ENCODE measurements at regions of chr6 and their contacts with region 1.

Region 1: DNA sequence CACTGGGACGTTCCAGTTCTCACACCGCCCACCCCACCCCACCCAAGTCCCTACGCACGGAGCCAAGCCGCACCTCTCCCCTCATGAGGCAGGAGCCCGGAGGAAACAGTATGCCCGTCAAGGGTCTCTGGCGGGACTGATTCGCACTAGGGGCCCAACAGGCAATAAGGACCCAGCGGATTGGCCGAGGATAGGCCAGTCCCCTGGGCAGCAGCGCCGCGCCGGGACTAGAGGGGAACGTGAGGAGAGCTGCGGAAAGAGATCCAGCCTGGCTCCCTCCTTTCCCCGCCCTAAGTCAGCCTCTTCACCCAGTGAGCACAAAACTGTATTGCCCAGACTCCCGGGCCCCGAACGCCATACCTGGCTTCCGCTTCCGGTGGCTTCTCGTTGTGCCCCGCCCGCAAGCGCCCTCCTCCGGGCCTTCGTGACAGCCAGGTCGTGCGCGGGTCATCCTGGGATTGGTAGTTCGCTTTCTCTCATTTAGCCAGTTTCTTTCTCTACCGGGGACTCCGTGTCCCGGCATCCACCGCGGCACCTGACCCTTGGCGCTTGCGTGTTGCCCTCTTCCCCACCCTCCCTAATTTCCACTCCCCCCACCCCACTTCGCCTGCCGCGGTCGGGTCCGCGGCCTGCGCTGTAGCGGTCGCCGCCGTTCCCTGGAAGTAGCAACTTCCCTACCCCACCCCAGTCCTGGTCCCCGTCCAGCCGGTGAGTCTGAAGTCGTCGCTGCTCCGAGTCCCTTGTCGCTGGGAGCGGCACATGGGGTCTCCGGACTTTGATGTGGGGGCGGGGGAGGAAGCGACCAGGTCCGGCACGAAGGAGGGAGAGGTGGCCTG is at the start of gene CSNK2B:
- DNase-seq: peak; percentile 99
- H3K4me3 ChIP-seq: peak within 1 kb of the TSS; percentile 81 to 96 (median 88)
- H3K27ac ChIP-seq: peak within 1 kb of the TSS; percentile 95 to 98 (median 98)
- H3K4me1 ChIP-seq: peaks cover 0 to 60% (median 47%) of the 10 kb centered on the region in 4 donors
- H3K27me3 ChIP-seq: no peaks in the 10 kb centered on the region
- CTCF ChIP-seq: no peak
- EP300 ChIP-seq: no peak
- POLR2A ChIP-seq: peak; percentile 54 to 84
- total RNA-seq, gene CSNK2B: 188 to 227 (median 209) TPM

Region 2: DNA sequence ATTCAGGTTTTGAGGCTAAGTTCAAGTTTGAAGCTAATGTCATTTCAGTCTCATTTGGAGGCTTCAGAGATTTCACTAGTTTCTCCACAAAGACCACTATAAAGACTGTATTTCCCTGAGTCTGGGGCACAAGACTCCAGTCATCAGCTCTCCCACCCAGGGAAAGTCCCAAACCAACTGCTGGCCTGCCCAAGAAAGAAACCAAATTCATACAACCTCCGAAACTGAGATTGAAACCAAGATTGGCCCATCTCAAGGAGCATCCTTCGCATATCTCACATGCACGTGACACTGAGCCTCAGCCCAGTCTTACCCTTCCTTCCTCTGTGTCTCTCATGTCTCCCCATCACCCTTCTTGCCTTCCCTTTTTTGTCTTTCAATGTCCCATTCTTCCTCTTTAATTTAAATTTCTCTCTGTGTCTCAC is 97.2 kb before region 1 on chr6:
- intact Hi-C with region 1: no loop called
- DNase-seq: no peak
- H3K4me3 ChIP-seq: no peak overlapping the region
- H3K27ac ChIP-seq: no peak overlapping the region
- H3K4me1 ChIP-seq: no peaks in the 10 kb centered on the region
- H3K27me3 ChIP-seq: peaks cover 0 to 28% (median 0%) of the 10 kb centered on the region in 3 donors
- CTCF ChIP-seq: no peak
- EP300 ChIP-seq: no peak
- POLR2A ChIP-seq: no peak

Region 3: DNA sequence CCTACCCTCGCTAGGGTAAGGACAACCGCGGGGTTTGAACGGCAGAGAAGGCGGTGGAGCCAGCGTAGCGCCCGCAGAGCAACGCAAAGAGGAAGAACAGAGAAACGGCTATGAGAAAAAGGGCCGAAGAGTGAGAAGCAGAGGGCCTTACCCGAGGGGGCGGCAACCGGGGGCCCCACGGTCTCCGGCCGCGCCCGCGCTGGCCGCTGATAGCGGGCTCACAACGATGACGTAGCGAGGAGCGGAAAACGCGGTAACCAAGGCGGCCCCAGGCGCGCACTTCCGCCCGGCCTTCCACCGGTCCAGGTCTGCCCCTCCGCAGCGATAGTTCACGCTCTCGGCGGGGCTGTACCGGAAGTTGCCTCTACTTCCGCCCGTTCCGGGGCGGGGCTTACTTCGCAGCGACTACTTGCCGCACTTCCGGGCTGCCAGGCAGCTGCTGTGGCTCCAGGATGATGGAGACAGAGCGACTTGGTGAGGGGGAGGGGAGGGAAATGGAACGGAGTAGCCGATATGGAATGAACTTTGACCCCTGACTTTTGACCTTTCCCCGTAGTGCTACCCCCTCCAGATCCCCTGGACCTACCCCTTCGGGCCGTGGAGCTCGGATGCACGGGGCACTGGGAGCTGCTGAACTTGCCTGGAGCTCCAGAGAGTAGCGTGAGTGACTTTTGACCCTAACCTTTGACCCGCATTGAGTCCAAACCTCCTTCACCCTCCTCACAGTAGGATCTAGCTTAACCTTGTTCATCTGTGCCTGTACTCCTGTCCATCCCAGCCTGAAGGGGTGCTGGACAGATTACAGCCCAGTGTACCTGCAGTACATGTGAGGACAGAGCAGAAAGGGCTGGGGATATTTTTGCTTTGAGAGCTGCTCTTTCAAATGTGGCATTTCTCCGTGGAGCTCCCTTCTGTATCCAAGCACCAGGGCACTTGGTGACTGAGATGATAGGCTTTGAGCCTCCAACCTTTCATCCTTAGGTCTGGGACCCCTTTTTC is 293.3 kb after region 1 on chr6 and contains the starts of genes NELFE and SKIC2:
- intact Hi-C with region 1: no loop called
- DNase-seq: peak; percentile 99
- H3K4me3 ChIP-seq: peak within 1 kb of the TSS; percentile 65 to 92 (median 83)
- H3K27ac ChIP-seq: peak within 1 kb of the TSS; percentile 77 to 91 (median 88)
- H3K4me1 ChIP-seq: peaks cover 0 to 25% (median 22%) of the 10 kb centered on the region in 4 donors
- H3K27me3 ChIP-seq: no peaks in the 10 kb centered on the region
- CTCF ChIP-seq: no peak
- EP300 ChIP-seq: peak in 1 of 4 donors; percentile 48
- POLR2A ChIP-seq: peak; percentile 46 to 52
- total RNA-seq, gene NELFE: 60.1 to 96.9 (median 75.8) TPM
- total RNA-seq, gene SKIC2: 22.1 to 73.4 (median 33.4) TPM

Region 4: GRCh38 chr6:32177788-32178546 is 512.2 kb after region 1 on chr6 and contains the start of gene RNF5:
- intact Hi-C with region 1: loop called (anchors 5 kb)
- DNase-seq: peak; percentile 99
- H3K4me3 ChIP-seq: peak within 1 kb of the TSS; percentile 85 to 97 (median 92)
- H3K27ac ChIP-seq: peak within 1 kb of the TSS; percentile 88 to 96 (median 94)
- H3K4me1 ChIP-seq: peaks cover 0 to 71% (median 50%) of the 10 kb centered on the region in 4 donors
- H3K27me3 ChIP-seq: no peaks in the 10 kb centered on the region
- CTCF ChIP-seq: no peak
- EP300 ChIP-seq: peak in 1 of 4 donors; percentile 22
- POLR2A ChIP-seq: peak in 1 of 2 donors; percentile 24
- total RNA-seq, gene RNF5: 61.5 to 118 (median 95.1) TPM

Region 5: DNA sequence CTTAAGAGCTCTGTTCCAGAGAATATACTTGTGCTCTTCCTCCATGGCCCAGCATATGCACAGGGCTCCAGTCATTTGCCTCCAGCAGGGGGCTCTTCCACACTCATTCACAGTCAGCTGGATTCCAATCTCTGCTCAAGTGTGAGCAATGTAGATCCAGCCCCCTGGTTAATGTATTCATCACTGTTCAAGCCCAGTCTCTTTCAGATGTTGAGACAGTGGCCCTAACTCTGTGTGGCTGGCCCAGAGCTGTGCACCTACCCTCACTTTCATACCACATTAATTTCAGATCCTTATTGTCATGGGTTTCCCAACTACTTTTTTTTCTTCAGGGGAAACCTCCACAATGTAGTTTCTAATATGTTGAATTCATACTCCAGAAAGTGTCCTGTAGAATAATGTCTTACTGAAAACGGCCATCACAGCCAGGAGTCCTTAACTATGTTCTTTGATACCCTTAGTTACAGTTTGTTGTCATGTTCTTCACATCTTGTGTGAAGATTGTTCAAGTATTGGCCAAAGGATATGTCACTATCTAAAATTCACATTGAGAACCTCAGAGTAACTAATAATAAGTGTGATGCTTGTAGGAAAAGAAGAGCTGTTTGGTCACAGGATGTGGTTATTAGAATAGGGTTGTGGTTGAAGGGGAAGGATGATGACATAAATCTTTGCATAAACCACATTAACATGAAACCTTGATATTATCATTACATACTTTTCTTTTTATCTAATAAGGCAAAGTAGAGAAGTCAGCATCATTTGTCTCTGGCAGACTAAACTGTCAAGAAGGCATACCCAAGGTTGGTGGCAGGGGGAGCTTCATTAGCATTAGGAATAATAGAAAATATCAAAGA is 957.1 kb after region 1 on chr6:
- intact Hi-C with region 1: no loop called
- DNase-seq: no peak
- H3K4me3 ChIP-seq: no peak overlapping the region
- H3K27ac ChIP-seq: no peak overlapping the region
- H3K4me1 ChIP-seq: no peaks in the 10 kb centered on the region
- H3K27me3 ChIP-seq: no peaks in the 10 kb centered on the region
- CTCF ChIP-seq: no peak
- EP300 ChIP-seq: no peak
- POLR2A ChIP-seq: no peak

Region 6: GRCh38 chr6:33271458-33272274 is 1605.9 kb after region 1 on chr6 and contains the starts of genes RPS18 and VPS52:
- intact Hi-C with region 1: loop called (anchors 10 kb)
- DNase-seq: peak; percentile 99
- H3K4me3 ChIP-seq: peak within 1 kb of the TSS; percentile 56 to 88 (median 72)
- H3K27ac ChIP-seq: peak within 1 kb of the TSS; percentile 89 to 96 (median 90)
- H3K4me1 ChIP-seq: peaks cover 0 to 61% (median 57%) of the 10 kb centered on the region in 4 donors
- H3K27me3 ChIP-seq: no peaks in the 10 kb centered on the region
- CTCF ChIP-seq: no peak
- EP300 ChIP-seq: peak in 1 of 4 donors; percentile 11
- POLR2A ChIP-seq: peak; percentile 96 to 98
- total RNA-seq, gene RPS18: 2,427 to 4,810 (median 4,005) TPM
- total RNA-seq, gene VPS52: 26.2 to 44.6 (median 33.5) TPM